ENCODE measurements at regions of chr6 and their contacts with region 1.

Region 1: GRCh38 chr6:158452182-158452581 is 107.7 kb upstream of the TMEM181 start:
- DNase-seq: peak; percentile 86 to 95
- H3K4me3 ChIP-seq: no peak overlapping the region
- H3K4me3 Mint-ChIP-seq: peak overlapping the region; percentile 56
- H3K27ac Mint-ChIP-seq: peak overlapping the region; percentile 65
- H3K4me1 ChIP-seq: peaks cover 40% of the 10 kb centered on the region
- H3K4me1 Mint-ChIP-seq: peaks cover 29% of the 10 kb centered on the region
- H3K27me3 ChIP-seq: no peaks in the 10 kb centered on the region; the same call in 1 of the 2 replicates
- H3K27me3 Mint-ChIP-seq: no peaks in the 10 kb centered on the region
- CTCF ChIP-seq: peak in 1 of 2 experiments; percentile 34

Region 2: DNA sequence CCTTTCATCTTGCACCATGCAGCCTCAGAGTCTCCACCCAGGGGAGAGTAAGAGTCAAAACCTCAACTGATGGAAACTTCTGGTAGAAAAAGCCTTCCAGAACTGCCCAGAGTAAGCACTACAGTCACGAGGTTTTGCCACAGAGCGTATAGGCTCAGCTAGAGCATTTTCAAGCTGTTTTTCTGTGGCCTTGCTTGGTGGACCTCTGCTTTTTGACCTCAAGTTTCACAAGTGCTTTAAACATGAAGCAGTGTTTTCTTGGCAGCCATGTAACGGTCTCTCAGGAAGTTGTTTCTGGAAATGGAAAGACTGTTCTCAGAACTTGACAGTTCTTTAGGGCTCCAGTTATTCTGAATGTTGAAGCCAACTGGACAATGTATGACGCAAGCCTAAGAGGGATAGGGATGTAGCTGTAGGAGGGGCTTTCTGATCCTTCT is 924.7 kb before region 1 on chr6:
- CTCF ChIA-PET with region 1: no interaction called
- POLR2A ChIA-PET with region 1: no interaction called
- intact Hi-C with region 1: no loop called
- DNase-seq: no peak
- H3K4me3 ChIP-seq: no peak overlapping the region
- H3K4me3 Mint-ChIP-seq: no peak overlapping the region
- H3K27ac Mint-ChIP-seq: peak overlapping the region; percentile 49
- H3K4me1 ChIP-seq: peaks cover 29% of the 10 kb centered on the region
- H3K4me1 Mint-ChIP-seq: peaks cover 26% of the 10 kb centered on the region
- H3K27me3 ChIP-seq: no peaks in the 10 kb centered on the region
- H3K27me3 Mint-ChIP-seq: no peaks in the 10 kb centered on the region
- CTCF ChIP-seq: no peak

Region 3: DNA sequence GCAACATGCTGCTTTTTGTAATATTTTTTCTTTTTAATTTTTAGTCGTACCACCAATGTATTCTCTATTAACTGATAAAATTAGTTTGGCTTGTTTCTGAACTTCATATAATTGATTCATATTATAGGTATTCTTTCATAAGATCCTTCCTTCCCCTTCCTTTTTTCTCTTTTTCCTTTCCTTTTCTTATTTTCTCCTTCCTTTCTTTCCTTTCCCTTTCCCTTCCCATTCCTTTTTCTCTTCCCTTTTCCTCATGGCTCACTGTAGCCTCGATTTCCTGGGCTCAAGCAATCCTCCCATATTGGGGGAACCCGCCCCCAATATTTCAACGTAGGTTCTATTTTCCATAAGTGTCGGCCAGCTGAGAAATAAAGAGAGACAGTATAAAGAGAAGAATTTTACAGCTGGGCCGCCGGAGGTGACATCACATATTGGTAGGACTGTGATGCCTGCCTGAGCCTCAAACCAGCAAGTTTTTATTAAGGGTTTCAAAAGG is 156.2 kb before region 1 on chr6:
- CTCF ChIA-PET with region 1: no interaction called
- POLR2A ChIA-PET with region 1: no interaction called
- intact Hi-C with region 1: loop called (anchors 1 kb)
- DNase-seq: peak in 1 of 2 experiments; percentile 76
- H3K4me3 ChIP-seq: no peak overlapping the region
- H3K4me3 Mint-ChIP-seq: peak overlapping the region; percentile 50
- H3K27ac Mint-ChIP-seq: peak overlapping the region; percentile 88
- H3K4me1 ChIP-seq: peaks cover 30% of the 10 kb centered on the region
- H3K4me1 Mint-ChIP-seq: peaks cover 21% of the 10 kb centered on the region
- H3K27me3 ChIP-seq: no peaks in the 10 kb centered on the region
- H3K27me3 Mint-ChIP-seq: no peaks in the 10 kb centered on the region
- CTCF ChIP-seq: no peak

Region 4: DNA sequence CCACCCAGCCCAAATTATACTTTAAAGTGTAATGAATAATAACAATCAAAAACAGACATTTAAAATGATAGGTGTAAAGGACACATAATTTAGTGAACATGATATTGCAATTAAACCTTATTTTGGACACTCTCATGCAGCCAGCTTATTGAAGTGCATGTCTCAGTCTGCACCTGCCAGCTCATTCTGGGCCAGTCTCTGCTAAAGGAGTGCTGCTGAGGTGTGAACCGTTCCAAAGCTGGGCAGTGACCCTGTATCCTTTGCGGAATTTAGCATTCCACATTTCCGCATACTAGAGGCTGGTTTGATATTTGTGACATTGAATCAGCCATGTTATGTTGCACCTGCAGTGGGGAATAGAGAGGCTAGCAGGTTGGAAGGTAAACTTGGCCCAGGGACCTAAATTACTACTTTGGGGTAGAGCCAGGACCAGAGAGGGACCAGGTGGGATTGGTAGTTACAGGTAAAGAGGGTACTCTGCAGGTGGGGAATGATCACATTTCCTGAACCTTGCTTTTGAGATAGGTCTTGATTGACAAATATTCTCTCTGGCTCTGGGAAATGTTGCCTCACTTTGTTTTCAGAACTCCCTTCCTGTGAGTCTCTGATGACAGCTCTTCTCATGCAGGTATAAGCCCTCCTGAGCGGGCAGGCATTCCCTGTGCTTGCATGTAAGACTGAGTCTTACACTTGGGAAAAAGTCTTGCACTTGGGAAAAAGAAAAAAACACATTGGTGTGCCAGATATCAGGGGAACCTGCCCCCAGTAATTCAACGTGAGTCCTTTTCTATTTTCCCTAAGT is 113.7 kb before region 1 on chr6:
- CTCF ChIA-PET with region 1: no interaction called
- POLR2A ChIA-PET with region 1: no interaction called
- intact Hi-C with region 1: loop called (anchors 1 kb)
- DNase-seq: no peak
- H3K4me3 ChIP-seq: no peak overlapping the region
- H3K4me3 Mint-ChIP-seq: peak overlapping the region; percentile 2
- H3K27ac Mint-ChIP-seq: peak overlapping the region; percentile 72
- H3K4me1 ChIP-seq: peaks cover 27% of the 10 kb centered on the region
- H3K4me1 Mint-ChIP-seq: peaks cover 30% of the 10 kb centered on the region
- H3K27me3 ChIP-seq: no peaks in the 10 kb centered on the region
- H3K27me3 Mint-ChIP-seq: no peaks in the 10 kb centered on the region
- CTCF ChIP-seq: no peak

Region 5: DNA sequence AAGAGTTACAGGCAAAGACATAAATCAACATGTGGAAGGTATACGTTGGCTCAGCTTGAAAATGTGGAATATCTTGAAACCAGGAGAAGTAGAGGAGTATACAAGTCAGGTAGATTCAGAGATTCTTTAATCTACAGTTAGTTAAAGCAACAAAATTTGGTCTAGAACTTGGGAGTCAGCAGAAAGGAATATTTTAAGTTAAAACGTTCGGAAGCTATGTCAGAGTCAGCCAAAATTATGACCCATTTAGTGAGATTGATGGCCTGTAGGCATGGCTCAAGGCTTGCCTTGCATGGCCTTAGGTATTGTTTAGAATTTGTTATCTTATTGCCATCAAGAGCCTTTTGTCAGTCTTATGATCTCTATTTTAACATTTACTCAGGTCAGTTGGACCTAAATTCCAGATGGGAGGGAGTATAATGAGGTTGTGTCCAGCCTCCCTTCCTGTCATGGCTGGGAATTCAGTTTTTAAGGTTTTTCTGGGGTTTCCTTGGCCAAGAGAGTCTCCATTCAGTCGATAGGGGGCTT is 13.6 kb after region 1 on chr6:
- CTCF ChIA-PET with region 1: no interaction called
- POLR2A ChIA-PET with region 1: interaction called, 3 read pairs
- intact Hi-C with region 1: loop called (anchors 1 kb)
- DNase-seq: no peak
- H3K4me3 ChIP-seq: no peak overlapping the region
- H3K4me3 Mint-ChIP-seq: no peak overlapping the region
- H3K27ac Mint-ChIP-seq: peak overlapping the region; percentile 21
- H3K4me1 ChIP-seq: peaks cover 32% of the 10 kb centered on the region
- H3K4me1 Mint-ChIP-seq: peaks cover 46% of the 10 kb centered on the region
- H3K27me3 ChIP-seq: no peaks in the 10 kb centered on the region
- H3K27me3 Mint-ChIP-seq: no peaks in the 10 kb centered on the region
- CTCF ChIP-seq: no peak

Region 6: DNA sequence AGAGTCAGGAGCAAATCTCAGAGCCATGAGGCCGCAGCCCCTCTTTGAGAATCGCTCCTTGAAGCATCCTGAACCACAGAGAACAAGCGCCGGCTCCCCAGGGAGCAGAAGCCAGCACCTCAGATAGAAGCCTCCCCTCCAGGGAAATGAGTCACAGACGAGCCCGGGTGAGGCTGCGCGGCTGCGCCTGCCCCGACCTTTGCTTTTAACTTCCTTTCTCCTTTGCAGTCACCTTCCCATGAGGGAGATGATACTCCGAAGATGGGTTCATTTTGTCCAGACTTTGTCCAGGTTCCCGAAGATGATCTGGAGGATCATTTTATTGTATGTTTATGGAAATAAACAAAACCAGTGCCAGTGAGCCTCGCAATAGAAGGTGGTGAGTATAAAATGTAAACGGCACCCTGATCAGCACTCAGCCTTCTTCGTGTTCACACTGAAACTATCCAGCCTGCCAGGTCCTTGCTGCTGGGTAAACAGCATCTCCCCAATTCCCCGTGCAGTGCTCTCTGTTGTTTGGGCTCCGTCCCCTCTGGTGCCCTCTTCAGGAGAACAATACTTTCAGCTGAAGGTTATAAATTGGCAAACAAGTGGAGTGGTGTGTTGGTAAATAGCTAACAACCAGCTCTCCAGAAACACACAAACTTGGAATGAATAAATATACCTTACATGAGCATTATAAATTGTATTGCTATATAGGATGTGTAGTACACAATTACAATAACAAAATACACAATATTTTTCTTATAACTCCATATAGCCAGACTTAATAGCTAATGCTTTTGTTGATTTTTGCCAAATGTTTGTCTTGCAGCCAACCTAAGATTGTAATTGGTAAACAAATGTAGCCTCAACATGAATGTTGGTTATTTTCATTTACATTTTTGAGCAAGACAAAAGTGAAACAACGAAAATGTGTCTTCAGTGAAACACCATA is 66.3 kb after region 1 on chr6:
- CTCF ChIA-PET with region 1: no interaction called
- POLR2A ChIA-PET with region 1: no interaction called
- intact Hi-C with region 1: loop called (anchors 5 kb)
- DNase-seq: peak; percentile 70 to 73
- H3K4me3 ChIP-seq: peak overlapping the region; percentile 11
- H3K4me3 Mint-ChIP-seq: peak overlapping the region; percentile 73
- H3K27ac Mint-ChIP-seq: no peak overlapping the region
- H3K4me1 ChIP-seq: no peaks in the 10 kb centered on the region
- H3K4me1 Mint-ChIP-seq: peaks cover 6% of the 10 kb centered on the region
- H3K27me3 ChIP-seq: no peaks in the 10 kb centered on the region
- H3K27me3 Mint-ChIP-seq: no peaks in the 10 kb centered on the region
- CTCF ChIP-seq: peak in 1 of 2 experiments; percentile 68

Region 7: GRCh38 chr6:158803733-158804143 is 351.6 kb after region 1 on chr6:
- CTCF ChIA-PET with region 1: no interaction called
- POLR2A ChIA-PET with region 1: no interaction called
- intact Hi-C with region 1: no loop called
- DNase-seq: peak; percentile 68 to 70
- H3K4me3 ChIP-seq: no peak overlapping the region
- H3K4me3 Mint-ChIP-seq: peak overlapping the region; percentile 58
- H3K27ac Mint-ChIP-seq: peak overlapping the region; percentile 80
- H3K4me1 ChIP-seq: peaks cover 80% of the 10 kb centered on the region
- H3K4me1 Mint-ChIP-seq: peaks cover 54% of the 10 kb centered on the region
- H3K27me3 ChIP-seq: no peaks in the 10 kb centered on the region
- H3K27me3 Mint-ChIP-seq: no peaks in the 10 kb centered on the region
- CTCF ChIP-seq: no peak

Measured in Caco-2 (cell line).